ENCODE measurements at regions of chr20 and their contacts with region 1.

Region 1: DNA sequence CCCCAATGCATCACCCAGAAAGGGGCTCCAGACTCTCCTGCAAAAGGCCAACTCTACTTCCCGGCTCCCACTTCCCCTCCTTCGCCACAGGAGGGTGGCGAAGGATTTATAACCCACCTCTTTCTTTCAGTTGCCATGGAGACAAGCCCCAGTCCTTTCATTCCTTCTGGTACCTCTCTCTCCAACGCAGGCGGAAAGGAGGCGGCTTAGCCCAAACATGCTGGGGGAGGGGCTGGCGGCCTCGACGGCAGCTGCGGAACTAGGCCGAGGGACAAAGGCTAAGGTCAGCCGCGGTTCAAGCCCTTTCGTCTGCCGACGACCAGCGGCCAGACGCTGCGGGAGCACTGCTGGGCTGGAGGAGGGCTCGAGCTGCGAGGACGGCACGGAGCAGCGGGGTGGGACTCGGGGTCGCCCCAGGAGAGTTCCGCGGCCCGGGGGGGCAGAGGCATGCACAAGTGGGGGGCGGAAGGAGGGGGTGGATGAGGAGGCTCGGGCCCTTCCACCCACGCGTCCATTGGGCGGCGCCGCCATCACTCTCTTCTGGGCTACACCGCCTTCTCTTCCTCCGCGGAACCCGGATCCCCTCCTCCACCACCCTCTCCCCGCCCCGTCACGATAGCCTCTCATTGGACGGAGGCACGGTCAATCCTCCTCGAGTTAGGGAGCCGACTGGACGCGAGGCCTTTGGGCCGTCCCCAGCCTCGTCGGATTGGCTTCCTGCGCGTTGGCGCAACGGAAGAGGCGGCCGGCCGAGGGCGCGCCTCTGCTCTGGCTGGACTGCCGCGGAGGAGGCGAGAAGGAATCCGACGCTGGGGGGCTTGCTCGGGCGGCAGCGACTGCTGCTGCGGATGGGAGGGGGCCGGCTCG is at the start of gene PANK2:
- DNase-seq: peak; percentile 97
- ATAC-seq: peak; percentile 96
- H3K4me3 ChIP-seq: peak within 1 kb of the TSS; percentile 70 to 90 (median 86)
- H3K4me3 Mint-ChIP-seq: peak within 1 kb of the TSS; percentile 97
- H3K27ac ChIP-seq: peak within 1 kb of the TSS; percentile 72 to 90
- H3K27ac Mint-ChIP-seq: peak within 1 kb of the TSS; percentile 97
- H3K4me1 ChIP-seq: peaks cover 44 to 50% of the 10 kb centered on the region in 2 donors
- H3K4me1 Mint-ChIP-seq: peaks cover 54% of the 10 kb centered on the region
- H3K27me3 ChIP-seq: no peaks in the 10 kb centered on the region
- H3K27me3 Mint-ChIP-seq: no peaks in the 10 kb centered on the region
- CTCF ChIP-seq: peak; percentile 19
- total RNA-seq, gene PANK2: 63.3 and 70.6 TPM in 2 replicates

Region 2: GRCh38 chr20:3786665-3787323 is 102.1 kb before region 1 on chr20 and contains the start of gene CENPB:
- CTCF ChIA-PET with region 1: interaction called, 4 read pairs
- POLR2A ChIA-PET with region 1: interaction called, 3 read pairs
- intact Hi-C with region 1: loop called (anchors 2 kb)
- DNase-seq: peak; percentile 91
- ATAC-seq: peak; percentile 96
- H3K4me3 ChIP-seq: peak within 1 kb of the TSS; percentile 46 to 62 (median 59)
- H3K4me3 Mint-ChIP-seq: peak within 1 kb of the TSS; percentile 89
- H3K27ac ChIP-seq: peak within 1 kb of the TSS; percentile 16 to 56
- H3K27ac Mint-ChIP-seq: peak within 1 kb of the TSS; percentile 88
- H3K4me1 ChIP-seq: peaks cover 8 to 18% of the 10 kb centered on the region in 2 donors
- H3K4me1 Mint-ChIP-seq: peaks cover 30% of the 10 kb centered on the region
- H3K27me3 ChIP-seq: no peaks in the 10 kb centered on the region
- H3K27me3 Mint-ChIP-seq: no peaks in the 10 kb centered on the region
- CTCF ChIP-seq: peak; percentile 88
- total RNA-seq, gene CENPB: 43.7 and 46.4 TPM in 2 replicates

Region 3: DNA sequence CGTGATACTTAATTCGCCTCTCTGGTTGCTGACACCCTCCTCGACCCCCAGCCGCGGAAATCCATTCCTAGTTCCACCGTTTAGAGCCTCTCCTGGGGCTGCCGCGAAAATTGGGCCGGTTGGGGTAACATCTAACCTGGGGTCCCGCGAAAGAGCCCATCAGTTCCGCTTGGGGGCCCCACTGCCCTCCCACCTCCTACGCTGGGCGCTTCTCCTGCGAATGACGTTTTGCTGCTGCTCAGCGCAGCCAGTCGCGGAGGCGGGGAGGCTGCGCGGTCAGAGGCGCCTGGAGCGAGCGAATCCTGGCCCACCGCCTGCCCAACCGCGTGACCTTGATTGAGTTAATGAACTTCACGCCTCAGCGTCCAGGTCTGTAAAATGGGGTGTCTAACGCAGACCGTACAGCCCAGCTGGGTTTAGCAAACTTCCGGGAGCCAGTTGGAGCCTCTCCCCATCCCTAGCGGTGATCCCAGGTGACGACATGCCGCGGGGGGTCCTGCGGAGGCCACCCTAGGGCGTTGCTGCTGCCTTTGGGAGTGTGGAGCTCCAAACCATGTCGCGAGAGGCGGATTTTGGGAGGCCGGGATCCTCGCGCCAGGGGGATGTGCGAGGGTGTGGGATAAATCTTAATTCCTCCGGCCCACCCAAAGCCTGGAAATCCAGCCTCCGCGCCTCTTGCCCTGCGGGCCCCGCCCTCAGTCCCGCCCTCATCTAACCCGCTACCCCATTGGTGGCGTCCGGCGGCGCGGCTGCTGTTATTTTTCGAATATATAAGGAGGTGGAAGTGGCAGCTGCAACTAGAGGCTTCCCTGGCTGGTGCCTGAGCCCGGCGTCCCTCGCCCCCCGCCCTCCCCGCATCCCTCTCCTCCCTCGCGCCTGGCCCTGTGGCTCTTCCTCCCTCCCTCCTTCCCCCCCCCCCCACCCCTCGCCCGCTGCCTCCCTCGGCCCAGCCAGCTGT is 93.1 kb before region 1 on chr20 and contains the start of gene CDC25B:
- CTCF ChIA-PET with region 1: no interaction called
- POLR2A ChIA-PET with region 1: no interaction called
- intact Hi-C with region 1: loop called (anchors 2 kb)
- DNase-seq: peak; percentile 89
- ATAC-seq: peak; percentile 76
- H3K4me3 ChIP-seq: peak within 1 kb of the TSS; percentile 64 to 100 (median 90)
- H3K4me3 Mint-ChIP-seq: peak within 1 kb of the TSS; percentile 97
- H3K27ac ChIP-seq: peak within 1 kb of the TSS; percentile 93 to 97
- H3K27ac Mint-ChIP-seq: peak within 1 kb of the TSS; percentile 98
- H3K4me1 ChIP-seq: peaks cover 47 to 52% of the 10 kb centered on the region in 2 donors
- H3K4me1 Mint-ChIP-seq: peaks cover 49% of the 10 kb centered on the region
- H3K27me3 ChIP-seq: no peaks in the 10 kb centered on the region
- H3K27me3 Mint-ChIP-seq: no peaks in the 10 kb centered on the region
- CTCF ChIP-seq: peak; percentile 39
- total RNA-seq, gene CDC25B: 72.3 and 77.3 TPM in 2 replicates

Region 4: GRCh38 chr20:3846740-3847428 is 42.0 kb before region 1 on chr20 and contains the start of gene MAVS:
- CTCF ChIA-PET with region 1: interaction called, 3 read pairs
- POLR2A ChIA-PET with region 1: interaction called, 3 read pairs
- intact Hi-C with region 1: loop called (anchors 1 kb)
- DNase-seq: peak; percentile 88
- ATAC-seq: peak; percentile 98
- H3K4me3 ChIP-seq: peak within 1 kb of the TSS; percentile 59 to 93 (median 86)
- H3K4me3 Mint-ChIP-seq: peak within 1 kb of the TSS; percentile 90
- H3K27ac ChIP-seq: peak within 1 kb of the TSS; percentile 63 to 86
- H3K27ac Mint-ChIP-seq: peak within 1 kb of the TSS; percentile 87
- H3K4me1 ChIP-seq: peaks cover 8 to 18% of the 10 kb centered on the region in 2 donors
- H3K4me1 Mint-ChIP-seq: peaks cover 32% of the 10 kb centered on the region
- H3K27me3 ChIP-seq: no peaks in the 10 kb centered on the region
- H3K27me3 Mint-ChIP-seq: no peaks in the 10 kb centered on the region
- CTCF ChIP-seq: no peak
- total RNA-seq, gene MAVS: 52.2 and 53.3 TPM in 2 replicates

Region 5: GRCh38 chr20:3911956-3912355 is 23.1 kb after region 1 on chr20:
- CTCF ChIA-PET with region 1: interaction called, 3 read pairs
- POLR2A ChIA-PET with region 1: interaction called, 3 read pairs
- intact Hi-C with region 1: loop called (anchors 2 kb)
- DNase-seq: no peak
- ATAC-seq: no peak
- H3K4me3 ChIP-seq: no peak overlapping the region
- H3K4me3 Mint-ChIP-seq: no peak overlapping the region
- H3K27ac ChIP-seq: no peak overlapping the region
- H3K27ac Mint-ChIP-seq: peak overlapping the region; percentile 56
- H3K4me1 ChIP-seq: peaks cover 9 to 10% of the 10 kb centered on the region in 2 donors
- H3K4me1 Mint-ChIP-seq: peaks cover 28% of the 10 kb centered on the region
- H3K27me3 ChIP-seq: no peaks in the 10 kb centered on the region
- H3K27me3 Mint-ChIP-seq: no peaks in the 10 kb centered on the region
- CTCF ChIP-seq: no peak

Region 6: DNA sequence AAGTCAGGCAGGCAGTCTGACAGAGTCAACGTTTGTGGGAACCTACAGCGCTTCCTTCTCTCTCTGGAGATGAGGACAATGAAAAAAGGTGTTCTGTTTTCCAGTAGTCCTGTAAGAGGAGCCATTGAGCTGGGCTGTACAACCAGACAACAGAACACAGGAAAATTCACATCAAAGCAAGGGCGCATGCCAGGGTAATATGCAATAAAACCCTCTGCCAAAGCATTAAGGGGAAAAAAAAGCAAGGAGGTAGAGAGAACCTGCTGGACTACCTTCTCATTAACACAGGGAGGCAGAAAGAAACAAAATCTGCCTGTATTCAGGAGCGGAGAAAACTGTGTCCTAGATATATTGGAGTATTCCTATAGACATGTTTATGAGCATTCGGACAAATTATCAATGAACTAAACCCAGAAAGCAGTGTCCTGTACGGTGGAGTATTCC is 125.2 kb after region 1 on chr20:
- CTCF ChIA-PET with region 1: no interaction called
- POLR2A ChIA-PET with region 1: no interaction called
- intact Hi-C with region 1: loop called (anchors 1 kb)
- DNase-seq: peak; percentile 55
- ATAC-seq: no peak
- H3K4me3 ChIP-seq: peak overlapping the region in 1 of 5 experiments; percentile 69
- H3K4me3 Mint-ChIP-seq: peak overlapping the region; percentile 78
- H3K27ac ChIP-seq: no peak overlapping the region
- H3K27ac Mint-ChIP-seq: peak overlapping the region; percentile 2
- H3K4me1 ChIP-seq: peaks cover 14 to 30% of the 10 kb centered on the region in 2 donors
- H3K4me1 Mint-ChIP-seq: peaks cover 28% of the 10 kb centered on the region
- H3K27me3 ChIP-seq: no peaks in the 10 kb centered on the region
- H3K27me3 Mint-ChIP-seq: no peaks in the 10 kb centered on the region
- CTCF ChIP-seq: peak; percentile 25

Measured in B cell (primary cell).